ENCODE measurements at regions of chr1 and their contacts with region 1.

Region 1: GRCh38 chr1:224329842-224330753 is at the start of gene NVL:
- DNase-seq: peak; percentile 96
- ATAC-seq: peak; percentile 88
- H3K4me3 ChIP-seq: peak within 1 kb of the TSS; percentile 94
- H3K27ac ChIP-seq: peak within 1 kb of the TSS; percentile 90
- H3K4me1 ChIP-seq: peaks cover 31% of the 10 kb centered on the region
- H3K27me3 ChIP-seq: no peaks in the 10 kb centered on the region
- CTCF ChIP-seq: no peak
- total RNA-seq, gene NVL: 26.6 and 37.1 TPM in 2 replicates

Region 2: DNA sequence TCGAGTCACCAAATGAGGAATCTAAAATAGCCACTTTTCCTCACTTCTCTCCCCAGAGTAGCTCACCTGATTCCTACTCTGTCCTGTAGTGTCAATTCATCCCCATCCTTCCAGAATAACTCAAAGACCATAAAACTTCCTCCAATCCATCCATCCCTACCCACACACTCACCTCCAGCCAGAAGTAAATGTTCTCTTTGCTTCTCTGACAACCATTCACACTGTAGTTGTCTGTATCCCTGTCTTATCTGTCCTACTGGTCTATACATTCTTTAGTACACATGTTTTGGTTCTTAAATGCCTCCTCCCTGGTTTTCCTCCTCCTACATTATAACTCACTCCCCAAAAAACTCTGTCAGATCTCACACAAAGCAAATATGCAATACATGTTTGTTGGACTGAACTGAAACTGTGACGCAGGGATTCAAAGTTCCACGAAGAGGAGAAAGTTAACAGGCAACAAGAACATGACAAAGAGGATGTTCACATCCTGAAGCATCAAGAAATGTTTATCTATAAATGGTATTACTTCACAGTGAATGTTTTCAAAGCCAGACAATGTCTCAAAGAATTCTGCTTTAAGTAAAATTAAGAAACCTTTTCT is 495.3 kb before region 1 on chr1:
- CTCF ChIA-PET with region 1: no interaction called
- POLR2A ChIA-PET with region 1: interaction called, 10 read pairs
- intact Hi-C with region 1: no loop called
- DNase-seq: peak; percentile 63
- ATAC-seq: peak; percentile 21
- H3K4me3 ChIP-seq: peak overlapping the region; percentile 5; the same call in 1 of the 2 replicates
- H3K27ac ChIP-seq: peak overlapping the region; percentile 44
- H3K4me1 ChIP-seq: peaks cover 49% of the 10 kb centered on the region
- H3K27me3 ChIP-seq: no peaks in the 10 kb centered on the region
- CTCF ChIP-seq: no peak

Region 3: DNA sequence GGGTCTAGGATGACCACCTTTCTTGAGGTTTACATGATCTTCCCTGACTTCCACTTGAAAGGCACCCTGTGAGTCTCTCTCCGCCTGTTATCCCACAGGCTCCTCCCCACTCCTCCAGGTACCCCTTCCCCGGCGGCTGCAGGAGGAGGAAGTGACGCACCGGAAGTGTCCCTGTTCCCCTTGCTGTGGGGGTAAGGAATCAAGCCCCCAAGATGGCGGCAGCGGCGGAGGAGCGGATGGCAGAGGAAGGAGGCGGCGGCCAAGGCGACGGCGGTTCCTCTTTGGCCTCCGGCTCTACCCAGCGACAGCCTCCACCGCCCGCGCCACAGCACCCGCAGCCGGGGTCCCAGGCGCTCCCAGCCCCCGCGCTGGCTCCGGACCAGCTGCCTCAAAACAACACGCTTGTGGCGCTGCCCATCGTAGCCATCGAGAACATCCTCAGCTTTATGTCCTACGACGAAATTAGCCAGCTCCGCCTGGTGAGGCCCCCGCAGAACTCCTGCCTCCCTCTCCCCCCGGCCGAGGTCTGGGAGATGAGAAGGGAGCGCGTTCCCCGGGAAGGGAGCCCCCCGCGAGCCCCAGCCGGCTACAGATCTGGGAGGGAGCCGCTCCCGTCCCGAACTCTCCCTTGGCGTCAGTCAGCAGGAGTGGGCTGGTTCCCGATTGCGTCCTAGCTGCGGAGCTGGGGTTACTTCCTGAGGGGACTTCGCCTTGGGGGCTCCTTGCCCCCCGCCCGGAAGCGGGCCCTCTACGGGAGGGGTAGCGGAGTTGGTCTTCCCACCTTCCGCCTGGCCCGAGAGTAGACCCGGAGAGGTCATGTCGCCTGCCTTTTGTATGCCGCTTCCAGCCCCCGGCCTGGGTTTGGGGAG is 215.9 kb before region 1 on chr1 and contains the start of gene FBXO28:
- CTCF ChIA-PET with region 1: interaction called, 3 read pairs
- POLR2A ChIA-PET with region 1: no interaction called
- intact Hi-C with region 1: loop called (anchors 1 kb)
- DNase-seq: peak; percentile 98
- ATAC-seq: peak; percentile 94
- H3K4me3 ChIP-seq: peak within 1 kb of the TSS; percentile 91
- H3K27ac ChIP-seq: peak within 1 kb of the TSS; percentile 48
- H3K4me1 ChIP-seq: peaks cover 26% of the 10 kb centered on the region
- H3K27me3 ChIP-seq: no peaks in the 10 kb centered on the region
- CTCF ChIP-seq: no peak
- total RNA-seq, gene FBXO28: 57.7 and 82.6 TPM in 2 replicates

Region 4: GRCh38 chr1:224196813-224197625 is 133.1 kb before region 1 on chr1:
- CTCF ChIA-PET with region 1: no interaction called
- POLR2A ChIA-PET with region 1: no interaction called
- intact Hi-C with region 1: no loop called
- DNase-seq: no peak
- ATAC-seq: no peak
- H3K4me3 ChIP-seq: no peak overlapping the region
- H3K27ac ChIP-seq: no peak overlapping the region
- H3K4me1 ChIP-seq: peaks cover 13% of the 10 kb centered on the region
- H3K27me3 ChIP-seq: no peaks in the 10 kb centered on the region
- CTCF ChIP-seq: no peak

Region 5: DNA sequence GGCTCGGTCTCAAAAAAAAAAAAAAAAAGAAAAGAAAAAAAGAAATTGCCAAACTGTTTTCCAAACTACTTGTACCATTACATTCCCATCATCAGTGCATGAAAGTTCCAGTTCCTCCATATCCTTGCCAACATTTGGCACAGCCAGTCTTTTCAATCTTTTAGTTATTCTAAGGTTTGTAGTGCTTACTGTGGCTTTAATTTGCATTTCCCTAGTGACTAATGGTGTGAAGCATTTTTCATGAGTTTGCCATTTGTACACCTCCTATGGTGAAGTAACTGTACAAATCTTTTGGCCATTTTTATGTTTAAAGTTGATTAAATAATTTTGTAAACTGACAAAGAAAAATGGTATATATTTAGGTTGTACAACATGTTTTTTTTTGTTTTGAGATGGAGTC is 76.4 kb before region 1 on chr1:
- CTCF ChIA-PET with region 1: no interaction called
- POLR2A ChIA-PET with region 1: no interaction called
- intact Hi-C with region 1: loop called (anchors 5 kb)
- DNase-seq: no peak
- ATAC-seq: no peak
- H3K4me3 ChIP-seq: no peak overlapping the region
- H3K27ac ChIP-seq: no peak overlapping the region
- H3K4me1 ChIP-seq: no peaks in the 10 kb centered on the region
- H3K27me3 ChIP-seq: no peaks in the 10 kb centered on the region
- CTCF ChIP-seq: no peak

Region 6: GRCh38 chr1:224300314-224300713 is 29.8 kb before region 1 on chr1:
- CTCF ChIA-PET with region 1: no interaction called
- POLR2A ChIA-PET with region 1: interaction called, 3 read pairs
- intact Hi-C with region 1: loop called (anchors 2 kb)
- DNase-seq: peak; percentile 95
- ATAC-seq: peak; percentile 92
- H3K4me3 ChIP-seq: no peak overlapping the region; the same call in 1 of the 2 replicates
- H3K27ac ChIP-seq: peak overlapping the region; percentile 61
- H3K4me1 ChIP-seq: peaks cover 46% of the 10 kb centered on the region
- H3K27me3 ChIP-seq: no peaks in the 10 kb centered on the region
- CTCF ChIP-seq: no peak

Region 7: GRCh38 chr1:224434691-224435317 is 104.7 kb after region 1 on chr1 and contains the start of gene WDR26:
- CTCF ChIA-PET with region 1: no interaction called
- POLR2A ChIA-PET with region 1: no interaction called
- intact Hi-C with region 1: no loop called
- DNase-seq: peak; percentile 81
- ATAC-seq: peak; percentile 76
- H3K4me3 ChIP-seq: peak within 1 kb of the TSS; percentile 83
- H3K27ac ChIP-seq: peak within 1 kb of the TSS; percentile 67
- H3K4me1 ChIP-seq: peaks cover 46% of the 10 kb centered on the region
- H3K27me3 ChIP-seq: no peaks in the 10 kb centered on the region
- CTCF ChIP-seq: 0 out of 2 replicates have a peak, but pooled peaks have one; percentile 24
- total RNA-seq, gene WDR26: 40.7 and 45.2 TPM in 2 replicates